ENCODE measurements at regions of chr3 and their contacts with region 1.

Region 1: DNA sequence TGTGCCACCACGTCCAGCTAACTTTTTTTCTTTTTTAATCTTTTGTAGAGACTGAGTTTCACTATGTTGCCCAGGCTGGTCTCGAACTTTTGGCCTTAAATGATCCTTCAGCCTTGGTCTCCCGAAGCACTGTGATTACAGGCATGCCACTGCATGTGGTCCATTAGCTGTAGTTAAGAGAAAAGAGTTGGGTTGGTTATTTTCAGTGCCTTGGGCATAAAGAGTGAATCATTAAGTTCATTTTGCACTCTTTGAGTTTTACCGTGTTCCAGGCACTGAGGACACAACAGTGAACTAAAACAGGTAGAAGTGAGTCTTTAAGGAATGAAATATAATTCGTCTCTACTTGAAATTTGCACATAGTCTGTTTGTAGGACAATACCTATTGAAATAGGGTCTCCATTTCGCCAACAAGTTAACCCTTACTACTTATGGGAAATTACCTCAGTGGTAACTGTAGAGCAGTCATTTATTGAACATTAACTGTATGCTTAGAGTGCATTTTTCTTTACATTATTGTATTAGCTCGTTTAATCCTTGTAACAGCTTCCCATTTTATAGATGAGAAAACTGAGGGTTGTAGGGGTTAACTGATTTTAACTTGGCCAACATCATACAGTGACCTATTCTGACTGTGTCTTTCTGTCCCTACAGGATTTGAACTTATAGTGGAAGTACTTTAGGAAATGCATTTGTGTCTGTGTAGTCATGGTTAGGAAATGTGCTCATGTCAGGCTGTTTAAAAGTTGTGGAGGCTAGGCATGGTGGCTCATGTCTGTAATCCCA is 22.7 kb upstream of the TRAK1 start:
- DNase-seq: no peak
- H3K4me3 ChIP-seq: no peak overlapping the region
- H3K4me3 Mint-ChIP-seq: no peak overlapping the region
- H3K27ac Mint-ChIP-seq: no peak overlapping the region
- H3K4me1 ChIP-seq: no peaks in the 10 kb centered on the region
- H3K4me1 Mint-ChIP-seq: no peaks in the 10 kb centered on the region
- H3K27me3 ChIP-seq: no peaks in the 10 kb centered on the region
- H3K27me3 Mint-ChIP-seq: no peaks in the 10 kb centered on the region
- CTCF ChIP-seq: no peak

Region 2: DNA sequence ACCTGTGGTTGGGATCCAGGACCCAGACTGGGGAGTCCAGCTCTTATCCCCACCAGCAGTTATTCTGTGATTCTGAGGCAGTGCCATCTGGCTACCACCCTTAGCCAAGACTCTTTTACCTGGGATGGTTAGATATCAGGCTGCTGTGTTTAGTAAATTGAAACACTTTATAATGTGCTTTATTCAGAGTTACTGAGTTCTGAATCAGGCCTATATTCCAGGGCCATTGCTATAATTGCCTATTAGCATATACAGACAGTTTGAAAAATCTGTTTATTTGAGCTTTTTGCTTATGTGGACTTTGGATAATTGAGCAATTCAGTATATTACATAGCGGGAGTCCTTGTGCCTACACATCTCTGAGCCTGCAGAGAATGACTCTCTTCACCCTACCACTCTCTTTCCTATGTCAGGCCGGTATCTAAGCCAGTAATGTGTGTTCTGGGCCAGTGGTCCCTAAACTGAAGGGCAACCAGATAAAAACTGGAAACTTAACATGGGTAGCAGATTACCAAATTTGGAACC is 22.7 kb before region 1 on chr3:
- CTCF ChIA-PET with region 1: no interaction called
- POLR2A ChIA-PET with region 1: no interaction called
- intact Hi-C with region 1: loop called (anchors 1 kb)
- DNase-seq: no peak
- H3K4me3 ChIP-seq: no peak overlapping the region
- H3K4me3 Mint-ChIP-seq: no peak overlapping the region
- H3K27ac Mint-ChIP-seq: no peak overlapping the region
- H3K4me1 ChIP-seq: no peaks in the 10 kb centered on the region
- H3K4me1 Mint-ChIP-seq: peaks cover 15% of the 10 kb centered on the region
- H3K27me3 ChIP-seq: no peaks in the 10 kb centered on the region
- H3K27me3 Mint-ChIP-seq: no peaks in the 10 kb centered on the region
- CTCF ChIP-seq: no peak